A549 (cell line): ENCODE measurements at regions of chr5 and their contacts with region 1.

Region 1: GRCh38 chr5:31186672-31187267 is 6.7 kb upstream of the CDH6 start:
- DNase-seq: peak; percentile 25 to 38
- ATAC-seq: 0 out of 6 replicates have a peak, but pooled peaks of 1 of the 2 experiments have one; percentile 59
- H3K4me3 ChIP-seq: no peak overlapping the region
- H3K27ac ChIP-seq: no peak overlapping the region
- H3K4me1 ChIP-seq: no peaks in the 10 kb centered on the region
- CTCF ChIP-seq: peak; percentile 65
- EP300 ChIP-seq: no peak
- POLR2A ChIP-seq: no peak
- RAD21 ChIP-seq: peak; percentile 45 to 50

Region 2: DNA sequence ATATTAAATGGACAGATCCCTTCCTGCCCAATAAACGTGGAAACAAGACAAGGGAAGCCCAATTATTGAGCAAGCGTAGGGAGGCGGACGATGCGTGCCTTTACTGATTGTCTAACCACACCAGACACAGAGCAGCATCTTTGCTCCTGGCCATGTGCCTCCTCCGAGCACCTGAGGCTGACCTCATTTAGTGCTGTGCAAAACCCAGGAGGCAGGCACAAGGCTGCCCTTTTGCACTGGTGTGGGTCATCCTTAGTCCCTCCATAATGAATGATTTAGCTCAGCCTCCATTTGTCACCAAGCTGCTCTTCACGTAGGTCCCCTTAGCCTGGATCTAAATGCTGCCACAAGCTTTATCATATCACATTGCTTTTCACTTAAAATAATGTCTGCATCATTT is 17.4 kb before region 1 on chr5:
- CTCF ChIA-PET with region 1: interaction called, 13 read pairs
- POLR2A ChIA-PET with region 1: no interaction called
- DNase-seq: no peak
- ATAC-seq: no peak
- H3K4me3 ChIP-seq: no peak overlapping the region
- H3K27ac ChIP-seq: no peak overlapping the region
- H3K4me1 ChIP-seq: no peaks in the 10 kb centered on the region
- CTCF ChIP-seq: no peak
- EP300 ChIP-seq: no peak
- POLR2A ChIP-seq: no peak
- RAD21 ChIP-seq: no peak